Left ventricle myocardium inferior (tissue), 1 donor: ENCODE measurements at regions of chr5 and their contacts with region 1.

Region 1: DNA sequence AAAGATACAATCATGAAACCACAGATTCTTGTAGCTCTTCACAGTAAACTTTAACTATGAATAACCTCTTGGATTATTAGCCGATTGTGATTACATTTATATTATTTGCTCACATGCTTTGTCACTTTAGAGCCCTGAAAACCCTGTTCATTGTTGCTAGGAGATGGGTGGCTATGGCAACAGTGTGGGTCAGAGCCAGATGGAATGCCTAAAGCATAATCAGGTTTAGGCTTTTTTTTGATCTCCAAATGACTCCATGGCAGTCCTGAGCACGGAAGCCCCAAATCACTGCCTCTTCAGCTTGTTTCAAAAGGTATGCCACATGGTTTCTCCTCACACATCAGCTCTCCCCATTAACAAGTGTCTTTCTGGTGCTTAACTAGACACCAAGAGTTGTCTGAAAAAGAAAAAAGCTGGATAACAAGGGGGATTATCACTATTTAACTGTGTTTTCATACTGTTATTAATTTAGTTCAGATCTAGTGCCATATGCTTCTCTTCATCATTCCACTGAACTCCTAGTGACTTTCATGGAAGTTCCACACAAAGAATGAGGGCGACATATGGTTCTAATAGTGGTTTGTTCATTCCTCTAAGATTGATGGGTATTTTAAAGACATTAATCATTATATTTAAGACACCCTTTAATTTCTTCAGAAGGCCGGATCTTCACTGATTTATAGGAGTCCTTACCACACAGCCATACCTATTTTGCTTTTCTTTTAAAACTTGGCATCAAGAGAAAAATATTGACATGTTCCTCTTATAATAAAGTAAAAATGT is 88.8 kb upstream of the PAM start:
- DNase-seq: no peak
- H3K4me3 ChIP-seq: no peak overlapping the region
- H3K27ac ChIP-seq: no peak overlapping the region
- H3K4me1 ChIP-seq: peaks cover 8% of the 10 kb centered on the region
- H3K27me3 ChIP-seq: no peaks in the 10 kb centered on the region
- CTCF ChIP-seq: no peak

Region 2: DNA sequence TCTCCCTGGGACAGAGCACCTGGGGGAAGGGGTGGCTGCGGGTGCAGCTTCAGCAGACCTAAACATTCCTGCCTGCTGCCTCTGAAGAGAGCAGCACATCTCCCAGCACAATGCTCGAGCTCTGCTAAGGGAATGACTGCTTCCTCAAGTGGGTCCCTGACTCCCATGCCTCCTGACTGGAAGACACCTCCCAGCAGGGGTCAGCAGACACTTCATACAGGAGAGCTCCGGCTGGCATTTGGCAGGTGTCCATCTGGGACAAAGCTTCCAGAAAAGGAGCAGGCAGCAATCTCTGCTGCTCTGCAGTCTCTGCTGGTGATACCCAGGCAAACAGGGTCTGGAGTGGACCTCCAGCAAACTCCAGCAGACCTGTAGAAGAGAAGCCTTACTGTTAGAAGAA is 244.7 kb before region 1 on chr5:
- intact Hi-C with region 1: no loop called
- DNase-seq: no peak
- H3K4me3 ChIP-seq: no peak overlapping the region
- H3K27ac ChIP-seq: no peak overlapping the region
- H3K4me1 ChIP-seq: no peaks in the 10 kb centered on the region
- H3K27me3 ChIP-seq: no peaks in the 10 kb centered on the region
- CTCF ChIP-seq: no peak

Region 3: GRCh38 chr5:102583276-102584124 is 82.9 kb before region 1 on chr5:
- intact Hi-C with region 1: loop called (anchors 10 kb)
- DNase-seq: no peak
- H3K4me3 ChIP-seq: no peak overlapping the region
- H3K27ac ChIP-seq: no peak overlapping the region
- H3K4me1 ChIP-seq: peaks cover 7% of the 10 kb centered on the region
- H3K27me3 ChIP-seq: no peaks in the 10 kb centered on the region
- CTCF ChIP-seq: peak; percentile 58